ENCODE measurements at regions of chr16 and their contacts with region 1.

Region 1: DNA sequence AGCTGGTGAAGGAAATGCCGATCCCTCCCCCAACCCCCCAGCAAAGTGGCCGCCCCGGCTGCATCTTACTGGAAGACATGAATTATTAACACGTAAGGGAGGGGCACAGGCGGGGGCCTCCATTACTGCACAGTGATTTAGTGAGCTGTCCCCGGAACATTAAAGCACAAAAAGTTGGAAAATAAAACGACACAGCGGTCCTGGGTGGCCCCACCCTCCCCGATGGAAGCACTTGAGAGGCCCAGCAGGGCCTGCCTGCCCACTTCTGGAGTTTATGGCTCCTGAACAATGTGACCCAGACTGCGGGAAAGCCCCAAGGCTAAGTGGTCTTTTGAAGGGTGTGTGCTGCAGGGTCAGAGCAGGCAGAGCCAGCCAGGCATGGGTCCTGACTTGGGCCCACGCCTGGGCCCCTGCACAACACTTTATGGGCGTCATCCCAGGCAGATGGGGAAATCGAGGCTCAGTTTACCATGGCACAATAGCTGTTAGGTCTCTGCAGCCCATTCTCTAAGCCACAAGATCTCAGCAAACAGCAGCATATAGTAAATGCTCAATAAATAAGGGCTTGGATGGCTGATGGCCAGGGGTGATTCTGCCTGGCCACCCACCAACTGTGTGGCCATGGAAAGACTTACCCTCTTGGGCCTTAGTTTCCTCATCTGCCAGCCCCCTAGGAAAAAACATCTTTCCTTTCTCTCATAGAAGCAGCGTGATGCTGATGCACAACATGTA is 22.8 kb downstream of the CCDC102A start:
- DNase-seq: no peak
- ATAC-seq: no peak

Region 2: GRCh38 chr16:57284208-57284951 is 229.2 kb before region 1 on chr16 and contains the start of gene PLLP:
- intact Hi-C with region 1: no loop called
- DNase-seq: peak; percentile 40
- ATAC-seq: peak; percentile 76 to 89
- total RNA-seq, gene PLLP: 5.0 to 8.2 TPM

Region 3: DNA sequence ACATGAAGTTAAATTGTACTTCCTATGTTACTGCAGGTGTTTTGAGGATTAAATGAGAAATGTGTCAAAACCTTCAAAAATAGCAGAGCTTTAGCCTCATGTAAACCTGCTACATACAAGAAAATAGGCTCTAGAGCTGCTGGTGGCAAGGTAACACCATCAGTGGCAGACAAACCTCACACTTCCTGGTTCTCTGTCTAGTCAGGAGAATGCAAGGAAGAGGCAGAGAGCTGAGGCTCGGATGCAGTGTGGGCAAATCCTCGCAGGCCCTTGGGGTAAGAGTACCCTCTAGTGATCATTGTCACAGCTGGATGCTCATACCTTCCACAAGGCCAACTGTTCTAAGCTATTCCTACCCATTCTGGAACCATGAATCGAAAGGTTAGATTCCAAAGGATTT is 80.5 kb before region 1 on chr16:
- intact Hi-C with region 1: loop called in 1 of 2 experiments (anchors 5 kb)
- DNase-seq: no peak
- ATAC-seq: no peak

Region 4: GRCh38 chr16:58236231-58236690 is 722.7 kb after region 1 on chr16:
- intact Hi-C with region 1: no loop called
- DNase-seq: peak; percentile 80
- ATAC-seq: peak; percentile 95 to 98

Measured in left cardiac atrium (tissue), 4 donors.